Activated T-helper 1 cell treated with anti-CD3 and anti-CD28 coated beads, Interleukin-12 subunit alpha, Interleukin-12 subunit beta, Interleukin-2, Interleukin-4 antibody, amounts not matched to agents 30 ng/mL and 10 ng/mL and 1 ng/mL, durations not matched to agents 14 hours and 24 hours and 36 hours (primary cell): ENCODE measurements at regions of chr12 and their contacts with region 1.

Region 1: DNA sequence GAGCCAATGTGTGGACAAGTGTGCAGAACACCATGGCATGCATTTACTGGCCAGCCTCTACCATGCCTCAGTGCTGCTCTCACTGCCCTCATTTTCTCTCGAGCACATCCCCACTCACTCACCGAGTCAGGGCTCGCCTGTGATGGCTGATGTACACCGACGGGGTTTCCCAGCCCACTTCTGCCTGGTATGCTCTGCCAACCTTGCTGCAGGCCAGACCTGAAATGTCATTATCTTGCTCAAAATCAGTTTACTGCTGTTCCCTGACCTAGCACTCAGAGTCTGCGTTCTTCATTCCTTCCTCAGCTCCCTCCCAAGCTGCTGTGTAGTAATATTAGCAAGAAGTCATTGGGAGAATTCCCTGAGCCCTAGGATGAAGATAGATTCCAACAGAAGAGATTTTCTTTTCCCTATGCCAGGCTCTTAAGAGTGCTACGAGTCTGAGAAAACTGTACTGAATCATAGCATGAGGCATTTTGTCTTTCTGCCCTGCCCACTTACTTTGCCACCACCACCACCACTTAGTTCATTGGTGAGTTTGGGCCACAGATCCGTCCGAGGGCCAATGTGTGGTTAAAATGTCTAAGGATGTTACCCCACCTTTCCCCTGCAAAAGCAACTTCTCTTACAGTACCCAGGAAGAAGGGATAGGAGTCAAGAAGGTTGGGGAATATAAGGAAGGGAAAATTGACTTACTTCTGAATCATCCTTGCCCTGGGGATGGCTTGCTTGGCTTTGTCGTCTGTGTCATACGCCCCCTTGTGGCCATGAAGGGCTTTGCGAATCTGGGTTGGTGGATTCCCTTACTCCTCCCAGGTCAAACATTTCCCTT is 51.0 kb downstream of the BMAL2 start:
- DNase-seq: peak; percentile 57
- H3K4me3 Mint-ChIP-seq: no peak overlapping the region
- H3K27ac Mint-ChIP-seq: no peak overlapping the region
- H3K4me1 Mint-ChIP-seq: peaks cover 7% of the 10 kb centered on the region
- H3K27me3 Mint-ChIP-seq: no peaks in the 10 kb centered on the region

Region 2: DNA sequence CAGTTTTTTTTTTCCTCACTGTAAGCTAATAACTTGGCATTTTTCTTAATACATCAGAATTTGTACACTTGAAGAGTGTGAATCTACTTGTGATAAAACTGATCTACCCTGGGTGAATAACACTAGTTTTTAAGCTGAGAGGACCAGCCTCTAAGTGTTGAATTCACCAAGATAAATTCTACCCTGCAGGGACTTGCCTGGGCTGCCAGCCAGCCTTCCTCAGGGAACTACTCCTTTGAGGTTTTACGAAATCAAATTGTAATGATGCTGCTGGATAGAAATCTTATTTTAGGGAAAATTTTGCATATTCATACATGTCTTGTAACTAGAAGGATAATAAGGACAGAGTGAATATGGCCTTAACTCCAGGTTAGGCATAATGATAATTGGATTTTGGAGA is 359.4 kb before region 1 on chr12:
- intact Hi-C with region 1: loop called (anchors 5 kb)
- DNase-seq: no peak
- H3K4me3 Mint-ChIP-seq: peak overlapping the region; percentile 43
- H3K27ac Mint-ChIP-seq: no peak overlapping the region
- H3K4me1 Mint-ChIP-seq: peaks cover 46% of the 10 kb centered on the region
- H3K27me3 Mint-ChIP-seq: peaks cover 2% of the 10 kb centered on the region

Region 3: GRCh38 chr12:27034607-27035293 is 348.9 kb before region 1 on chr12:
- intact Hi-C with region 1: loop called (anchors 2 kb)
- DNase-seq: no peak
- H3K4me3 Mint-ChIP-seq: no peak overlapping the region
- H3K27ac Mint-ChIP-seq: no peak overlapping the region
- H3K4me1 Mint-ChIP-seq: no peaks in the 10 kb centered on the region
- H3K27me3 Mint-ChIP-seq: no peaks in the 10 kb centered on the region

Region 4: GRCh38 chr12:27359578-27360340 is 23.9 kb before region 1 on chr12:
- intact Hi-C with region 1: no loop called
- DNase-seq: no peak
- H3K4me3 Mint-ChIP-seq: no peak overlapping the region
- H3K27ac Mint-ChIP-seq: no peak overlapping the region
- H3K4me1 Mint-ChIP-seq: peaks cover 6% of the 10 kb centered on the region
- H3K27me3 Mint-ChIP-seq: peaks cover 3% of the 10 kb centered on the region

Region 5: DNA sequence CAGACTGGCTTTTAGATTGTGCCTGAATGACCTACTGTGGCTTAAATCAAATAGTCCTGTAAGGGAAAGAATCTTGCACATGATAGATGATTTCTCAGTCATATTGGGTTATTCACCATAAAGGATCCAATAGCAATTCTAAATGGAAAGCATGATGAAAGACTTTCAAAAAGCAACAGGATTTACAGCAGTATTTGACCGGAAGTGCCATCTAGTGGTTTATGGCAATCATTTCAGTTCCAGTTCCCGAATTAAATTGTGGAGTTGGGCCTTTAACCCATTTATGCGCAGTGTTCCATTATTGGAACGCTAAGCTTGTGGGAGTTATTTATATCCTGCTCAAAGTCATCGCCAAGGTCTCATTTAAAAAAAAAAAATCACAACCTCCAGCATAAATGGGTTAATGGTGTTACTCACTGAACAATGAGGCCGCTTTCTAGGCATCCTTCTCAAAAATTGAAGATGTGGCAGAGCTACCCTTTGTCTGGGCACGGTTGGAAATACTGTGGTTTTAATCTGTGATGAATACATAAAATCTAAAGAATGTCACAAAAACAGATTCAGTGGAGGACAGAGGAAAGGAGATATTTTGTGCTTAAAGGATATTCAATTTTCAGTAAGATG is 251.8 kb after region 1 on chr12:
- intact Hi-C with region 1: loop called (anchors 1 kb)
- DNase-seq: no peak
- H3K4me3 Mint-ChIP-seq: no peak overlapping the region
- H3K27ac Mint-ChIP-seq: no peak overlapping the region
- H3K4me1 Mint-ChIP-seq: peaks cover 39% of the 10 kb centered on the region
- H3K27me3 Mint-ChIP-seq: peaks cover 2% of the 10 kb centered on the region

Region 6: GRCh38 chr12:27652174-27652763 is 268.6 kb after region 1 on chr12:
- intact Hi-C with region 1: loop called (anchors 5 kb)
- DNase-seq: peak; percentile 23
- H3K4me3 Mint-ChIP-seq: no peak overlapping the region
- H3K27ac Mint-ChIP-seq: no peak overlapping the region
- H3K4me1 Mint-ChIP-seq: peaks cover 42% of the 10 kb centered on the region
- H3K27me3 Mint-ChIP-seq: no peaks in the 10 kb centered on the region

Region 7: GRCh38 chr12:27703710-27704452 is 320.2 kb after region 1 on chr12:
- intact Hi-C with region 1: loop called (anchors 1 kb)
- DNase-seq: peak; percentile 62
- H3K4me3 Mint-ChIP-seq: no peak overlapping the region
- H3K27ac Mint-ChIP-seq: no peak overlapping the region
- H3K4me1 Mint-ChIP-seq: no peaks in the 10 kb centered on the region
- H3K27me3 Mint-ChIP-seq: peaks cover 11% of the 10 kb centered on the region